Activated CD4-positive, alpha-beta T cell treated with anti-CD3 and anti-CD28 coated beads for 36 hours (primary cell): ENCODE measurements at regions of chr18 and their contacts with region 1.

Region 1: GRCh38 chr18:596288-596881 is 403 bp upstream of the CLUL1 start:
- DNase-seq: peak; percentile 6
- ATAC-seq: peak; percentile 76
- H3K4me3 Mint-ChIP-seq: no peak overlapping the region
- H3K27ac Mint-ChIP-seq: no peak overlapping the region
- H3K4me1 Mint-ChIP-seq: peaks cover 8% of the 10 kb centered on the region
- H3K27me3 Mint-ChIP-seq: peaks cover 20% of the 10 kb centered on the region

Region 2: DNA sequence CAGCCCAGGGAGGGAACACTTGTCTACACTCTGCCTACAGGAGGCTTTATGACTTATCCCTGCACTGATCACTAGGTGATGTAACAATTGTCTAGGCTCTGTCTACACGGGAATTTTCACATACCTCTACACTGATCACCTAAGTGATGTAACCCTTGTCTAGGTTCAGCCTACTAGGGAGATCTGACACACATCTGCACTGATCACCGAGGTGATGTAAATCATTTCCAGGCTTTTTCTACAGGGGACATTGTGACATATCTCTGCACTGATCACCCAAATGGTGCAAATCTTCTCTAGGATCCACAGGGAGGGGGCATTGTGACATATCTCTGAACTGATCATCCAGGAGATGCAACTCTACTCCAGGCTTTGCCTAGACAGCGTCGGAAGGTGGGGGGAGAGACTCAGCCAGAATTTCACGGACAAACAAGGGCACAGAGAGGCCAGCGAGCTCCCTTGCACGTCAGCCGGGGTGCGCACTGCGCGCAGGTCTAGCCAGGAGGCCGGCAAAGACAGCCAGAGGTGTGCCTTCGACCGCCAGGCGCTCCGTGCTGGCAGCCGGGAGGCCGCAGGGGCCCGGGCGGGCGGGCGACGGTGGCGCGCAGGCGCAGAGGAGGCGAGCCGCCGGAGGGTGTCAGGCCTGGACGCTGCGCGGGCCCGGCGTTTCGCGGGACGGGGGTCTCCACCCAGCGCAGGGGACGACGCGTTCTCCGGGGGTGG is 484.9 kb before region 1 on chr18:
- CTCF ChIA-PET with region 1: interaction called, 3 read pairs
- POLR2A ChIA-PET with region 1: no interaction called
- intact Hi-C with region 1: loop called in 1 of 2 experiments (anchors 2 kb)
- DNase-seq: peak; percentile 80
- ATAC-seq: peak; percentile 64
- H3K4me3 Mint-ChIP-seq: peak overlapping the region; percentile 69
- H3K27ac Mint-ChIP-seq: peak overlapping the region; percentile 88
- H3K4me1 Mint-ChIP-seq: peaks cover 12% of the 10 kb centered on the region
- H3K27me3 Mint-ChIP-seq: no peaks in the 10 kb centered on the region

Region 3: DNA sequence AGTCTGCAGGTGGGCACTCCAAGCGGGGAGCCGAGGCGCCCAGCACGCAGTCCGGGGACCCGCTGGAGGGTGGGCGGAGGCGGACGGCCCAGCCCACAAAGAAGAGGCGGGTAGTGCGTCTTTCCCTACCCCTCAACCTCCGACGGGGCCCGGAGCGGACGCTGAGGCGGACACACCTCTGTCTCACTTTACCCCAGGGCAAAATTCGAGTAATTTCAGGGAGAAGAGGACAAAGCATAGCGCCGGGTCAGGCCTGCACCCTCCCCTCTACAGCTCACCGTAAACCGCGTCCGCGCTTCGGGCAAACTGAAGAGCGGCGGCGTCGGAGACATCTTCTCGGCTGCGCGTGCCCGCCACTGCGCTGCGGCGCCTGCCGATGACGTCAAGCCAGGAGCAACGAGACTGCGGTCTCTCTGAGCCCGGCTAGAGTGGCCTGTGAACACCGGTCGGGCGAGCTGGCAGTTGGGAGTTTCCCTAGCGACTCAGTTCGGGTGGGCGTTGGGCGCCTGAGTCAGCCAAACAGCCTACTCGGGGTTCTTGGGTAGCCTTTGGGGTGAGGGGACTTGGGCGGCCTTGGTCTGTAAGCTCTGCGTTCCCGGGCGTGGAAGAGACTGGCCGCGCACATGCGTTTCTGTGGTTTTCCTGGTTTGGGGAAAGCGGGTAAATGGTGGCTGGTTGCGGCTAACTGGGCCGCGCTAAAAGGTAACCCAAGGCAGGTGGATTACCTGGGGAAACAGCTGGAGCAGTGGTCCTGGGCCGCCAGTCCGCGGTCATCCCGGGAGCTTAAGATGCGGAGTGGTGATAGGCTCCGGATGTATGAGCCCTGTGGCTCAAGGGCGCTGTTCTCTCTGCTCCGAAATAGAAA is 328.5 kb before region 1 on chr18 and contains the start of gene THOC1:
- CTCF ChIA-PET with region 1: no interaction called
- POLR2A ChIA-PET with region 1: no interaction called
- intact Hi-C with region 1: loop called (anchors 1 kb)
- DNase-seq: peak; percentile 98
- ATAC-seq: peak; percentile 92
- H3K4me3 Mint-ChIP-seq: peak within 1 kb of the TSS; percentile 100
- H3K27ac Mint-ChIP-seq: peak within 1 kb of the TSS; percentile 100
- H3K4me1 Mint-ChIP-seq: peaks cover 39% of the 10 kb centered on the region
- H3K27me3 Mint-ChIP-seq: no peaks in the 10 kb centered on the region
- total RNA-seq, gene THOC1: 62.1 to 64.6 TPM

Region 4: DNA sequence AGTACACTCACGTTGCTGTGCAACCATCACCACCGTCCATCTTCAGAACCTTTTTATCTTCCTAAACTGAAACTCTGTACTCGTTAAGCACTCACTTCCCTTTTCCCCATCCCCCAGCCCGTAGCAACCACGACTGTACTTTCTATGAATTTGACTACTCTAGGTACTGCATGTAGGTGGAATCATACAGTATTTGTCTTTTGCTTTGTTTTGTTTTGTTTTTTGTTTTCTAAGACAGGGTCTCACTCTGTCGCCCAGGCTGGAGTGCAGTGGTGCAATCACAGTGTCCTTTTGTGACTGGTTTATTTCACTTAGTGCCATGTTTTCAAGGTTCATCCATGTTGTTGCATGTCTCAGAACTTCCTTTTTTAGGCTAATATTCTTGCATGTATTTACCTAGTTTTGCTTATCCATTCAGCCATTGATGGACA is 54.1 kb after region 1 on chr18:
- CTCF ChIA-PET with region 1: no interaction called
- POLR2A ChIA-PET with region 1: no interaction called
- intact Hi-C with region 1: loop called in 1 of 2 experiments (anchors 1 kb)
- DNase-seq: peak; percentile 61
- ATAC-seq: peak; percentile 80
- H3K4me3 Mint-ChIP-seq: no peak overlapping the region
- H3K27ac Mint-ChIP-seq: no peak overlapping the region
- H3K4me1 Mint-ChIP-seq: peaks cover 8% of the 10 kb centered on the region
- H3K27me3 Mint-ChIP-seq: peaks cover 7% of the 10 kb centered on the region

Region 5: DNA sequence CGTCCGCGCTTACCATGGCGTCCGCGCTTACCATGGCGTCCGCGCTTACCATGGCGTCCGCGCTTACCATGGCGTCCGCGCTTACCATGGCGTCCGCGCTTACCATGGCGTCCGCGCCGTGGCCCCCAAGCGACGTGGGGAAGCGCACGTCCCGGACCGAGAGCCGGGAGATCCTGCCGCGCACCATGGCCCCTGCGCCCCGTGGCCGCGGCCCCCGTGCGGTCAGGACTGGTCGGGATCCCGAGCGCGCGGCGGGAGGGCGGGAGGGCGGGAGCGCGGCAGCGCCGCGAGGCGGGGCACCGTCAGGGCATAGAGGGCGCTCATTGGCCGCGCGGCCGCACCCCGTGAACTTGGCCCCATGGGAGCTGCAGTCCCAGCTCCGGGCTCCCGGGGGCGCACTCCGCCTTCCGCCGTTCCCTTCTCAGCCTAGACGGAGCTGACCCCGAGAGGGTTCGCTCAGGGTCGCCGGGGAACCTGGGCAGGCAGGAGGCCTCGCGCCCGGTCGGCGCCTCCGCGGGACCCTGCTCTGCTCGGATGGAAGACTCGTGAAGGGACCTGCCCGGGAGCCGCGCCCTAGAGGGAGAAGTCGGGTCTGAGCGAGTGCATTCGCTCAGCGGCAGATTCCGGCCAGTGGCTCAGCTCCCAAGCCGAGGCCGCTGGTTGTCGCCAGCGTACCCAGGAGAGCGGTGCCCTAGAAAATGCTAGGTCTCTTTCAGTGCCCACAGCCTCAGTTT is 116.2 kb after region 1 on chr18 and contains the start of gene ENOSF1:
- CTCF ChIA-PET with region 1: no interaction called
- POLR2A ChIA-PET with region 1: no interaction called
- intact Hi-C with region 1: loop called (anchors 1 to 5 kb)
- DNase-seq: peak; percentile 95
- ATAC-seq: peak; percentile 91
- H3K4me3 Mint-ChIP-seq: peak within 1 kb of the TSS; percentile 94
- H3K27ac Mint-ChIP-seq: peak within 1 kb of the TSS; percentile 99
- H3K4me1 Mint-ChIP-seq: peaks cover 53% of the 10 kb centered on the region
- H3K27me3 Mint-ChIP-seq: no peaks in the 10 kb centered on the region
- total RNA-seq, gene ENOSF1: 92.6 to 97.4 TPM

Region 6: DNA sequence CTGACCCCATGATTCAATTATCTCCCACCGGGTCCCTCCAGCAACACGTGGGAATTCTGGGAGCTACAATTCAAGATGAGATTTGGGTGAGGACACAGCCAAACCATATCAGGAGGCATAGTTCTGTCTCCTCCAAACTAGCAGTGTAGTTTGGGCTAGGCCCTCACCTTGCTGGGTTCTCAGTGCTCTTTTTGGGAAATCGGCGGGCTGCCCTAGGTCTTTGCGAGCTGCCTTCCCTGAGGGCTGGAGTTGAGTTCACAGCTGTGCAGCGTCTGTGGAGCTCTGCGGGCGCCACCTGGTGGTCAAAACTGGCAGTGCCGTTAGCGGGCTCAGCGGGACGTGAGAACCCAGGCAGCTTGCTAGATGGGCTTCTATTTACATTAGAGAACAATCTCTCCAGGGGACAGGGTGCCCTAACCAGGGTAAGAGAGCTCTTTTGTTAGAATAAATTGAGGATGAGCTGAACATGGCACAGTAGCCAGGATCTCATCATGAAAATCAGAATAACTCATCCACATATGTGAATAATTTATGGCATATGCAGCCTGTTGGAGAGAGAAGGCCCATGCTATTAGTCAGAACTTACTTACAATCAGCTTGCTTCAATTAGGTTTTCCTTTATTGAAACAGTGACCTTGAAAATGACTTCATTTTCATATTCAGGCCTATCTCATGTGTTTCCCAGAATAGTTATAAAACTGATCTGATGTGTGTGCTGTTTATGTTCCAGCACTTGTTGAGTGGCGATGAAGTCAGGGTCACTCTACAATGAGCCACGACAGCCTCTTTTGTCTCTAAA is 243.0 kb after region 1 on chr18:
- CTCF ChIA-PET with region 1: no interaction called
- POLR2A ChIA-PET with region 1: interaction called, 3 read pairs
- intact Hi-C with region 1: loop called in 1 of 2 experiments (anchors 1 kb)
- DNase-seq: peak; percentile 94
- ATAC-seq: peak; percentile 99
- H3K4me3 Mint-ChIP-seq: no peak overlapping the region
- H3K27ac Mint-ChIP-seq: no peak overlapping the region
- H3K4me1 Mint-ChIP-seq: no peaks in the 10 kb centered on the region
- H3K27me3 Mint-ChIP-seq: peaks cover 5% of the 10 kb centered on the region